Activated CD4-positive, alpha-beta T cell treated with anti-CD3 and anti-CD28 coated beads, Interleukin-2, amount 10 ng/mL, durations not matched to agents 24 days and 14 days (primary cell): ENCODE measurements at regions of chr9 and their contacts with region 1.

Region 1: DNA sequence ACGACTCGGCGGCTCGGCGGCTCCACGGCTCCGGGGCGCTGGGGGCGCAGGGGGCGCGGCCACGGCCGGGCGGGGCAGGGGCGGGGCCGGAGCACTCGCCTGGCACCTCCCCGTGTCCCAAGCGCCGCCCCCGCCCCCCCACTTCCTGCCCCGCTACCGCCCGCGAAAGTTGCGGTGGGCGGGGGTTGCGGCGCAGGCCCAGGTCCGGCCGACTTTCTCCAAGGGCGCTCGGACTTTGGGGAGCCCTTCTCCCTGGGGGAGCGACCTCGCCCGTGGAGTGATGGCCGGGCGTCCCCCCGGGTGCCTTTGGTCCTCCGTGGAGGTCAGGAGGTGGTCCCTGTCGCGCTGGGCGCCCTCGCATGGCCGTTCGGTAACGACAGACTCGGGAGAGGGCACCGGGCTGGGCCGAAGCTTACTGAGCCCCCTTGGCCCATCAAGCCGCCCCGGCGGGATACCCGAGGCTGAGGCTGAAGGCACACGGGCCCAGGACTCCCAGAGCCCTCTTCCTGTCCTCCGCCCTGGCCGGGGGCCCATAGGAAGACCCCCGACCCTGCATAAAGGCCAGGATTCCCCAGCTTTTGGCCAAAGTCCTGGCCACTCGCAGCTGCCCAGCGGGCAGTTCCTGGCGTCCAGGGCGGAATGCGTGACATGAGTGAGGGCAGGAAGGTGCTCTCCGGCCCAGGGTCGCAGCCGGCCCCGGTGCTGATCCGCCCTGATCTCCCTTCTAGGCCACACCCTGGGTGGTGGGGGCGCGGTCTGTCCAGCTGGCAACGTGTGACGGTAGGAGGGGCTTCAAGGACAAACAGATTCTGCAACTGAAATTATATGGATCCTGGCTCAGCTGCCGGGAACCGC is 883 bp upstream of the VAV2 start:
- DNase-seq: peak; percentile 89
- H3K4me3 Mint-ChIP-seq: peak overlapping the region; percentile 70
- H3K27ac Mint-ChIP-seq: no peak overlapping the region
- H3K4me1 Mint-ChIP-seq: peaks cover 4% of the 10 kb centered on the region
- H3K27me3 Mint-ChIP-seq: peaks cover 14% of the 10 kb centered on the region

Region 2: DNA sequence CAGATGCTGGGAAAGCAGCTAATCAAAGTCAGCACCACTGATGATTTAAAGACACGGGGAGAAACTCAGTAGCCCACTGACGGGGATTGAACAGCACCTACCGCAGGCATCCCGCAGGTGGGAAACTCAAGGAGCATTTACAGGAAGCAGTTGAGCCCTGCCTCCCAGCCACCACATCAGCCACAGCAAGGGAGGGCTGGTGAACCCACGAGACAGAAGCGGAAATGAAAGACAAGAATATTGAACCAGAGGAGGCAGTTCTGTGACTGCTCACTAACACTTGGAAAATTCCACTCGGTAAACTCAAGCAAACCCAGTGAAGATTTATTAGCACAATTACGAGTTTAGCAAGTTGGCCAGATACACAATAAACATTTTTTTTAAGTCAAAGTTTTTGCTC is 373.2 kb before region 1 on chr9:
- intact Hi-C with region 1: no loop called
- DNase-seq: peak; percentile 88
- H3K4me3 Mint-ChIP-seq: peak overlapping the region; percentile 40
- H3K27ac Mint-ChIP-seq: peak overlapping the region; percentile 61
- H3K4me1 Mint-ChIP-seq: peaks cover 26% of the 10 kb centered on the region
- H3K27me3 Mint-ChIP-seq: peaks cover 9% of the 10 kb centered on the region

Region 3: GRCh38 chr9:133782157-133783130 is 210.6 kb before region 1 on chr9:
- intact Hi-C with region 1: loop called (anchors 1 kb)
- DNase-seq: peak; percentile 89
- H3K4me3 Mint-ChIP-seq: no peak overlapping the region
- H3K27ac Mint-ChIP-seq: no peak overlapping the region
- H3K4me1 Mint-ChIP-seq: peaks cover 2% of the 10 kb centered on the region
- H3K27me3 Mint-ChIP-seq: no peaks in the 10 kb centered on the region

Region 4: DNA sequence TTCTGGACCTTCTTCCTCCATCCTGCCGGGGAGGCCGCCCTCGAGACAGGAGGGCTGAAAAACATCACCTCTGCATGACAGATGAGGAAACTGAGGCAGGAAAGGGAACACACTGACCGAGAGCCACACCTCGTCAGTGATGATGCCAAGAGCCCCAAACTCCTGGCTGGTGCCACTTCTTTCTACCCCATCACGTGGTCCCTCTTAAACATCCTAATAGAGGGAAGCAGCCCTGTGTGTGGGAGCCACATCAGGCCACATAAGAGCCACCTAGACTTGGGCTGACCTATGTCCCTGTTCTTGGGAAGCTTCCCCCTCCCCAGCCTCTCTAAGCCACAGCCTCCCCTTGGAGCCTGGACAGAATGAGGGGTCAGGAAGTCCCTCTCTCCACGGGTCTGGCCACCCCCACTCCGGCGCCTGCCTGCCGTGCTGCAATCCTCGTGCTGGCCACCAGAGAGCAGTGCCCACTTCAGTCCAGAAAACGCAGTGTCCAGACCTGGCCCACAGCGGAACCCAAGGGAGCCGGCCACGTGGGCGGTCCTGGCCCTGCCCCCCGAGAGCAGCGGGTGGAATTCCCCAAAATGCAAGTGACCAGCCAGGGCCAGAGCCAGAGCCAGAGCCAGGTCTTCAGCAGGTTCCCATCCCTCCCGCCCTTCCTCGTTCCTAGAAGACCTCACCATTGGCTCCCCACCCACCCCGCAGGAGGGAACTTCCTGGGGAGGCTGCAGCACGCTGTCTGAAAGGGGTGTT is 200.1 kb before region 1 on chr9:
- intact Hi-C with region 1: loop called (anchors 1 kb)
- DNase-seq: peak; percentile 86
- H3K4me3 Mint-ChIP-seq: no peak overlapping the region
- H3K27ac Mint-ChIP-seq: no peak overlapping the region
- H3K4me1 Mint-ChIP-seq: peaks cover 2% of the 10 kb centered on the region
- H3K27me3 Mint-ChIP-seq: peaks cover 2% of the 10 kb centered on the region

Region 5: GRCh38 chr9:133928248-133928764 is 64.7 kb before region 1 on chr9:
- intact Hi-C with region 1: no loop called
- DNase-seq: no peak
- H3K4me3 Mint-ChIP-seq: no peak overlapping the region
- H3K27ac Mint-ChIP-seq: no peak overlapping the region
- H3K4me1 Mint-ChIP-seq: no peaks in the 10 kb centered on the region
- H3K27me3 Mint-ChIP-seq: no peaks in the 10 kb centered on the region

Region 6: GRCh38 chr9:134024828-134025605 is 32.0 kb after region 1 on chr9 and contains the start of gene BRD3OS:
- intact Hi-C with region 1: loop called (anchors 1 kb)
- DNase-seq: peak; percentile 97
- H3K4me3 Mint-ChIP-seq: peak within 1 kb of the TSS; percentile 83
- H3K27ac Mint-ChIP-seq: peak within 1 kb of the TSS; percentile 79
- H3K4me1 Mint-ChIP-seq: peaks cover 4% of the 10 kb centered on the region
- H3K27me3 Mint-ChIP-seq: no peaks in the 10 kb centered on the region
- total RNA-seq, gene BRD3OS: 12.6 and 14.9 TPM in 2 replicates

Region 7: DNA sequence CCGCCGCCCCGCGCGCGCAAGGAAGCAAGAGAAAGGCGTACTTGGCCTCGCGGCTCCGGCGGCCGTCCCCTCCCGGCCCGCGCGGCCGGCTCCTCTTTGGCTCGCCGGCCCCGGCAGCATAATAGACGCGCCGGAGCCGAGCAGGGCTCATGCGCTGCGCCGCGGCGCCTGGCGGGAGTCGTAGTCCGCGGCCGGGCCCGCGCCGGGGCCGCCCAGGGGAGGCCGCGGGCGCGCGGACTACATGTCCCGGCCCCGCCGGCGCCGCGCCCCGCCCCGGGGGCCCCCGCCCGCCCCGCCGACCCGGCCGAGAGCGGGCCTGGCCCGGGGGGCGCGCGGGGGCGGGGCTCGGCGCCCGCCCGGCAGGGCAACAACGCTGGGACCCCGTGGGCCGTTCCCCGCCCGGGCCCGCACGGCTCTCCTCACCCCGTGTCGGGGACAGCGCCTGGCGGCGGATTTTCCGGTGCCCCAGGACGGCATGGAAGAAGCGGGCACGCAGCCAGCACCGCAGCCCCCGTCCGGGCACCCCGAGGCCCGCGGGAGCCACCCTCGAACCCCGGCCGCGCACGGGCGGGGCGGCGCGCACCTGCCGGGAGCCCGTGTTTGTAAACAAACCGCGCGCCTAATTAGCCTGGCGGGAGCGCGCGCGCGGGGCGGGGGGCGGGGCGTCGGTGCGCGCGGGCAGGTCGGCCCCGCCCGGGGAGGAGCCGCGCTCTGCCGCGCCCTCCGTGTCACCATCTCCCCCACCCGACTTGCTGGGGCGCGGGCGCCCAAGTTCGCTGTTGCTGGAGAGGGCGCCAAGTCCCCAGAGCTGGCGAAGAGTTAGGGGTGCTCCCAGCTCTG is 75.1 kb after region 1 on chr9 and contains the start of gene BRD3:
- intact Hi-C with region 1: loop called (anchors 2 kb)
- DNase-seq: peak; percentile 96
- H3K4me3 Mint-ChIP-seq: peak within 1 kb of the TSS; percentile 95
- H3K27ac Mint-ChIP-seq: peak within 1 kb of the TSS; percentile 98
- H3K4me1 Mint-ChIP-seq: peaks cover 24% of the 10 kb centered on the region
- H3K27me3 Mint-ChIP-seq: peaks cover 24% of the 10 kb centered on the region
- total RNA-seq, gene BRD3: 32.3 and 40.9 TPM in 2 replicates